ENCODE measurements at regions of chr7 and their contacts with region 1.

Region 1: DNA sequence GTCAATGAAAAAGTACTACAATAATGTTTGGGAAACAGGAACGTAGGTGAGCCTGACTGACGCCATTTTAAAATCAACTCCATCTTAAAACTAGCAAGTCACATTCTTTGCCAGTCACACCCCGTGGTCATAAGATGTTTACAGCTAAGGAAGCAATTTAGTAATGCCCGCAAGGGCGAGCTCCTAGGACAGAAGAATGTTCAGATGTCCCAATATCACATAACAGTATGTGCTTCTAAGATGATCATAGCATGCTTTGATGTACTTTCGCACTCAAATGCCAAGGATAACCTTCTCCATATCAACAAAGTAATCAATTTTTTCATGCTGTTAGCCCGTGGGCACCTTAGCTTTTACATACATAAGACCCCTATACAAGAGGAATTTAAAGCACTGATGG is 113.8 kb upstream of the EGFR start:
- DNase-seq: no peak
- H3K4me3 ChIP-seq: no peak overlapping the region
- H3K27ac ChIP-seq: no peak overlapping the region
- H3K4me1 ChIP-seq: no peaks in the 10 kb centered on the region
- H3K27me3 ChIP-seq: no peaks in the 10 kb centered on the region
- CTCF ChIP-seq: no peak
- EP300 ChIP-seq: no peak
- POLR2A ChIP-seq: no peak

Region 2: DNA sequence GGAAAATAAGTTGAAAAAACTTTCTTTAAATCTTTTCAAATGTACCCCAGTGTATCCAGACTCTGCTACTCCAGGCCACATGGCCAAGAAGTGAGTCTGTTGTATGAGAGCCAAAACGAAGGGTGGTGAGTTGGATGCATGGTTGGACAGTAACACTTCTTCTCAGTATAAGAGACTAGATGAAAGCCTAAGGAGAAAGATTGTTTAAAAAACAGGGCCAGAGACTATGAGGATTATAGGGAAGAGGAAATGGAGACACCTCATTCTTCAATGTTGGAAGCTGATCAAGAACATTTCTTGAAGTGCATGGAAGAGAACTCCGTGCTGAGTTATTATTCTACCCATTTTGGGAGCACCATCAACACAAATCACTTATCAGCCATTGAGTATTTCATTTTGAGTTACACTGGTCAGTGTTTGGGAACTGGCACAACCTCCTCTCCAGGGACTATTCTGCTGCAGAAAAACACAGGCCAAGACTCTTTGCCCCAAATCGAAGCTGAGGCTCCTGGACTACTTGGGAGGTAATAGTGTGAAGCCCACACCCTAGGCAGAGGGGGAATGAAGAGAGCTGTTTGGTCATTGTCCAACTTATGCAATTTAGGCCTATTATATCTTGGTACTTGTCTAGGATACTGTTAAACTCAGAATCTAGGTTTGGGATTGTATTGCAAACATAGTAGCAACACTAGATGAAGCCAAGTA is 23.0 kb before region 1 on chr7:
- in situ Hi-C with region 1: no loop called
- intact Hi-C with region 1: loop called (anchors 1 kb)
- DNase-seq: no peak
- H3K4me3 ChIP-seq: no peak overlapping the region
- H3K27ac ChIP-seq: no peak overlapping the region
- H3K4me1 ChIP-seq: peaks cover 0 to 26% (median 1%) of the 10 kb centered on the region in 4 donors
- H3K27me3 ChIP-seq: no peaks in the 10 kb centered on the region
- CTCF ChIP-seq: no peak
- EP300 ChIP-seq: no peak
- POLR2A ChIP-seq: no peak

Measured in transverse colon (tissue), 4 donors.